Dorsolateral prefrontal cortex (tissue), 120 donors: ENCODE measurements at regions of chr1 and their contacts with region 1.

Region 1: DNA sequence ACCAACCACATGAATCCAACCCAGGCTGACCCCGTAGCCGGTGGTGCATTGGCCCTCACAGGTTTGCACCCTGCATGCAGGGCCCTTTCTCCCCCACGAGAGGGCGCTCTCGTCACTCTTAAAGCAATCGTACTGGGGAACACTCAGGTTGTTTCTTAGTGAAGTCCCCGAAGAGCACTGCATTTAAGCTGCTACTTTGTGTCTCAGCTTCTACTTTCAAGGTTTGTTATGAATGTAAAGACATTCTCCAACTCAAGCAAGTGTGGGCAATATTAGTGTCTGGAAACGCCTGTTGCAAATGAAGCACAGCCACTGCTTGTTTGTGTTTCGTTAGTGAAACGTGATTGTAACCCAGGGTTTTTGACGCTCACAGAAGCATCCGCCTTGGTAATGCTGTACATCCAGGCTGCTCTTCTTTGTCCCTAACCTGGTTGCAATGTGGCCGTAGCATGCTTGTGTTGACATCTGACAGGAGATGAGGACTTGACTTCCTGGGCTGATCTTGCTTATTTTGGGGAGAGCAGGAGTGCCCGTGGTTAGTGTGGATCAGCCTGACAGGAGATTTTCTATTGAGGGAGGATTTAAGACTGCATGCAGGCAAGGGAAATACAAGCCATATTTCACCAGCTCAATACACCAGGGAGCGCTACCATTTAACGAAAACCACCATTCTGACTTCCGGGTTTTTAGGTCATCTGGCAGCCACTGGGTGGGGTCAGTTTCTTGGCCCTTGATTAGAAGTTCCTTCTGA is 79.8 kb downstream of the ST6GALNAC3 start:
- DNase-seq: peak; percentile 61 to 89 (median 80)
- H3K4me3 ChIP-seq: peak overlapping the region; percentile 26 to 73 (median 53)
- H3K27ac ChIP-seq: peak overlapping the region in 52 of 59 donors; percentile 0 to 85 (median 57)
- H3K27me3 ChIP-seq: no peaks in the 10 kb centered on the region
- CTCF ChIP-seq: peak; percentile 81 to 99 (median 96)

Region 2: DNA sequence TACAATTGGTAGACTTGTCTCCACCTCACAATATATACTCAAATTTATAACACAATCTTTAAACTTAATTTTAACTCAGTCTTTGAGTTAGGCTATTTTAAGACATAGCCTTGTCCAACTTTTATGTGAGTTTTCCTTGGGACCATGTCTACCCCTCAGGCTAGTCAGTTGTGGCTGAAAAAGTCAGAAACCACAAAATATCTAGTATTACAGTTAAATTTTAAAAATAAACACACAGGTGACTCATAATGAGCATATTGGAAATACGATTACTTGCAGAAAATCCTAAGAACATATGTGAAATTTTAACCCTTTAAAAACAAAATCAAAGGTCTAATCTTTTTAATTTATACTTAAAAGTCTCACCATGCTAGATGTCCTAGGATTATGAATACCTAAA is 217.3 kb before region 1 on chr1:
- intact Hi-C with region 1: no loop called
- DNase-seq: no peak
- H3K4me3 ChIP-seq: no peak overlapping the region
- H3K27ac ChIP-seq: no peak overlapping the region
- H3K27me3 ChIP-seq: no peaks in the 10 kb centered on the region
- CTCF ChIP-seq: no peak

Region 3: DNA sequence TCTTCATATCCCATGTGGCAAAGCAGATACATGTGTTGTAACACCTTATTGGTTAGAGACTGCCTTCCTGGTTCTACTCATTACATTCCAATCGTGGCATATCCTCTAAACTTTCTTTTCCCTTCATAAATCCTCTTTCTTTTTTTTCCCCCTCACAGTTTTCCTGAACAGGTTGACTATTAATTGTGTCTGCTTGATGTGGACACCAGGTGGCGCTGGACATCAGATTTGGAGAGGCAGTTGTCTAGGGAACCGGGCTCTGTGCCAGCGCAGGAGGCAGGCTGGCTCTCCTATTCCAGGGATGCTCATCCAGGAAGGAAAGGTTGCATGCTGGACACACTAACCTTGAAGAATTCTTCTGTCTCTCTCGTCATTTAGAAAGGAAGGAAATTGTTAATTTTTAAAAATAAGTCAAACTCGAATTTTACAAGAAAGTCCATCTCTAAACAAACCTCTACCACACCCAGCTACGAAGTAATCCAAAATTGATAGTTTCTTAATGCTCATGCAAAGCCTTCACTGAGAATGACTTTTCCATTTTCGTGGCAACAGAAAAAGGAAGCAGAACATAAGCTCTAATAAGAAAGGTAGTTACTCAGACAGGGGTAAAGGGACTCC is 162.8 kb before region 1 on chr1:
- intact Hi-C with region 1: loop called in 1 of 2 experiments (anchors 5 kb)
- DNase-seq: peak; percentile 84 to 95 (median 92)
- H3K4me3 ChIP-seq: no peak overlapping the region
- H3K27ac ChIP-seq: no peak overlapping the region
- H3K27me3 ChIP-seq: peaks cover 0 to 10% (median 0%) of the 10 kb centered on the region in 45 donors
- CTCF ChIP-seq: peak; percentile 73 to 97 (median 88)

Region 4: DNA sequence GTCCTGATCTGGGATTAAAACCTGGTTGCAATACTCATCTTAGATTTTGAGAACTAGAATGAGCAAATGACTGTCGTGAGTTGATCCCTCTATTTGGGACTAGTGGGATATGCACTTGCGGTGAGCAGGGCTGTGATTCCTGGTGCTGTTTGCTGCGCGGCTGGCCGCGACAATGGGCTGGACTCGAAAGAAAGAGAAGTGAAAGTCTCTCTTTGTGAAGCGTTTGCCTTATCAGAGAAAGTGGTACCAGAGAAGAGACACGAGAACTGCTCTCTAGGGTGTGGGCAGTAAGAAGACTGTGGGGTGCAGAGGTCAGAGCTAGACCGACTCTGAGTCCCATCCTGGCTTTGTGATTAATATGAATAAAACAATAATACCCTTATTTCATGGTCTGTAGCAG is 71.2 kb before region 1 on chr1:
- intact Hi-C with region 1: loop called in 1 of 2 experiments (anchors 5 kb)
- DNase-seq: peak in 8 of 10 donors; percentile 30 to 64 (median 50)
- H3K4me3 ChIP-seq: peak overlapping the region in 55 of 59 donors; percentile 6 to 62 (median 38)
- H3K27ac ChIP-seq: peak overlapping the region in 32 of 59 donors; percentile 4 to 78 (median 38)
- H3K27me3 ChIP-seq: no peaks in the 10 kb centered on the region
- CTCF ChIP-seq: peak in 2 of 56 donors; percentile 4 to 26

Region 5: GRCh38 chr1:76330991-76331603 is 176.7 kb after region 1 on chr1:
- intact Hi-C with region 1: loop called (anchors 5 to 10 kb)
- DNase-seq: peak in 4 of 10 donors; percentile 11 to 70 (median 36)
- H3K4me3 ChIP-seq: no peak overlapping the region
- H3K27ac ChIP-seq: no peak overlapping the region
- H3K27me3 ChIP-seq: no peaks in the 10 kb centered on the region
- CTCF ChIP-seq: peak; percentile 81 to 99 (median 93)

Region 6: GRCh38 chr1:77126307-77126706 is 971.9 kb after region 1 on chr1:
- intact Hi-C with region 1: loop called in 1 of 2 experiments (anchors 2 kb)
- DNase-seq: peak in 1 of 10 donors; percentile 7
- H3K4me3 ChIP-seq: no peak overlapping the region
- H3K27ac ChIP-seq: no peak overlapping the region
- H3K27me3 ChIP-seq: no peaks in the 10 kb centered on the region
- CTCF ChIP-seq: peak; percentile 11 to 75 (median 62)

Region 7: DNA sequence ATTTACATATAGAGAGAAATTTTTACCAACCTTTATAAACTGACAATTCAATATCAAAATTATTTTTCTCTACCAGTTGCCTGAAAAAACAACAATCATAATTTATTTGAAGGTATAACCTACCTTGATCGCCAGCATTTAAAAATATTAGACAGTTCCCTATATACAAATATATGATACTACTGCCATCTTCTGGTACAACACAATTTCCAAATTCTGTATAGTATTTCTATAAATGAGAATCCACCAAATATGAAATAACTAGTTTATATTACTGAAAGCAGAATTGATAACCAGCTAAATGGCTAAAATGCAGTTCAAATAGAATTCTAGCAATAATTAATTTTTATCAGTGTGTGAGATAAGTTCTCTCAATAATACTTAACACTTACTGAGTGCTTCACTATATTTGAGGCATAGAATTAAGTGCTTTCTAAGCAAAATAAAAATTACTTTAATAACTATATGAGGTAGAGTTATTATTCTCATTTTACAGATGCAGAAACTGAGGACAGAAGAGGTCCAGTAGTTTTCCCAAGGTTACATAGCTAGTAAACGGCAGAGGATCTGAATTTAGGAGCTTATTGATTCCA is 989.2 kb after region 1 on chr1:
- intact Hi-C with region 1: loop called in 1 of 2 experiments (anchors 10 kb)
- DNase-seq: no peak
- H3K4me3 ChIP-seq: no peak overlapping the region
- H3K27ac ChIP-seq: no peak overlapping the region
- H3K27me3 ChIP-seq: no peaks in the 10 kb centered on the region
- CTCF ChIP-seq: peak in 54 of 56 donors; percentile 3 to 72 (median 52)